ENCODE measurements at regions of chr7 and their contacts with region 1.

Region 1: DNA sequence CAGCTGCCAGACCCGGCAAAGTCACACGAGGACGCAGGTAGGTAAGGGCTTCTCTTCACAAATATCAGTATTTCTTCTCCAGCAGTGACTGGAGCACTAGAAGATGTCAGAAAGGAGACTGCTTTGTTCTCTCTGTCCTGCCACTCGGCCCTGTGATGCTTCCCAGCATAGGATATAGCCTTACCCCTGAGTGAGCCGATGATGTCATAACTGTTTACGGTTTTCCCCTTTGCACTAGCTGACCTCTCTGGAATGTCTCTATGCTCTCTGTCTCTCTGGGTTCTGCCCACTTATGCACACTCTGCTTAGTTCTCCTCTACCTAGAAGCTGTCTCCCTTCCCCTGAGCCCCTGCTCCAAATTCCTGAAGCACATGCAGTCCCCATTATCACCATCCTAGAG is 167.5 kb upstream of the PODXL start:
- DNase-seq: no peak
- ATAC-seq: peak; percentile 82
- H3K4me3 ChIP-seq: no peak overlapping the region
- H3K27ac ChIP-seq: no peak overlapping the region
- H3K4me1 ChIP-seq: no peaks in the 10 kb centered on the region; the same call in 1 of the 2 replicates
- H3K27me3 ChIP-seq: no peaks in the 10 kb centered on the region; the same call in 1 of the 2 replicates
- CTCF ChIP-seq: no peak

Region 2: GRCh38 chr7:131090886-131091692 is 632.8 kb before region 1 on chr7:
- CTCF ChIA-PET with region 1: no interaction called
- POLR2A ChIA-PET with region 1: interaction called, 11 read pairs
- in situ Hi-C with region 1: no loop called
- intact Hi-C with region 1: no loop called
- DNase-seq: no peak
- ATAC-seq: no peak
- H3K4me3 ChIP-seq: no peak overlapping the region
- H3K27ac ChIP-seq: no peak overlapping the region
- H3K4me1 ChIP-seq: no peaks in the 10 kb centered on the region
- H3K27me3 ChIP-seq: no peaks in the 10 kb centered on the region
- CTCF ChIP-seq: no peak

Region 3: DNA sequence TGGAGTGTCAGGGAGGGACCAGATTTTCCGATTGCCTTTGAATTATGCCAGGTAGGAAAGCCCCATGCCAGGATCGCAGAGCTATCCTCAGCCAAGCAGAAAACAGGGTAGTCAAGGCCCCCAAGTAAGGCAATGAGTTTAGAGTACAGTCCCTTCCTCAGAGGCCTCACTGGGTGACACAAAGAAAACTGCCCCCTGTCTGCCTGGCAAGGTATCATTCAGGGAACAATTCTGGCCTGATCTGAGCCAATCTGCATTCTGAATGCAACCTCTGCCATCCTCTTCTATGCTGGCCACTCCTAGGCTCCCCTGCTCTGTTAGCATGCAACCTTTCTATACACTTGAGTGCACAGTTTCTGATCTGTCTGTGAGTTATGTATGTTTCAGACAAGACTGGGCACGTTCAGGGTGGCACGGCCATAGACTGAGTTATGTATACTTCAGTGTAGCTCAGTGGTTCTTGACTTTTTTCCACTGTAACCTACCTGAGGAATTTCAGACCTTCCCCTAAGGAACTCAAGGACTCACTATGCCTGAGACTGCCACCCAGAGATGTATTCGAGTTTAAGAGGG is 515.6 kb after region 1 on chr7:
- CTCF ChIA-PET with region 1: no interaction called
- POLR2A ChIA-PET with region 1: no interaction called
- in situ Hi-C with region 1: no loop called
- intact Hi-C with region 1: no loop called
- DNase-seq: no peak
- ATAC-seq: no peak
- H3K4me3 ChIP-seq: no peak overlapping the region
- H3K27ac ChIP-seq: no peak overlapping the region
- H3K4me1 ChIP-seq: no peaks in the 10 kb centered on the region
- H3K27me3 ChIP-seq: peaks cover 9% of the 10 kb centered on the region
- CTCF ChIP-seq: no peak

Region 4: GRCh38 chr7:133109816-133110215 is 1385.9 kb after region 1 on chr7:
- CTCF ChIA-PET with region 1: no interaction called
- POLR2A ChIA-PET with region 1: no interaction called
- in situ Hi-C with region 1: no loop called
- intact Hi-C with region 1: no loop called
- DNase-seq: no peak
- ATAC-seq: no peak
- H3K4me3 ChIP-seq: no peak overlapping the region
- H3K27ac ChIP-seq: no peak overlapping the region
- H3K4me1 ChIP-seq: no peaks in the 10 kb centered on the region
- H3K27me3 ChIP-seq: peaks cover 9% of the 10 kb centered on the region; the same call in 1 of the 2 replicates
- CTCF ChIP-seq: no peak